PC-9 (cell line): ENCODE measurements at regions of chr1 and their contacts with region 1.

Region 1: DNA sequence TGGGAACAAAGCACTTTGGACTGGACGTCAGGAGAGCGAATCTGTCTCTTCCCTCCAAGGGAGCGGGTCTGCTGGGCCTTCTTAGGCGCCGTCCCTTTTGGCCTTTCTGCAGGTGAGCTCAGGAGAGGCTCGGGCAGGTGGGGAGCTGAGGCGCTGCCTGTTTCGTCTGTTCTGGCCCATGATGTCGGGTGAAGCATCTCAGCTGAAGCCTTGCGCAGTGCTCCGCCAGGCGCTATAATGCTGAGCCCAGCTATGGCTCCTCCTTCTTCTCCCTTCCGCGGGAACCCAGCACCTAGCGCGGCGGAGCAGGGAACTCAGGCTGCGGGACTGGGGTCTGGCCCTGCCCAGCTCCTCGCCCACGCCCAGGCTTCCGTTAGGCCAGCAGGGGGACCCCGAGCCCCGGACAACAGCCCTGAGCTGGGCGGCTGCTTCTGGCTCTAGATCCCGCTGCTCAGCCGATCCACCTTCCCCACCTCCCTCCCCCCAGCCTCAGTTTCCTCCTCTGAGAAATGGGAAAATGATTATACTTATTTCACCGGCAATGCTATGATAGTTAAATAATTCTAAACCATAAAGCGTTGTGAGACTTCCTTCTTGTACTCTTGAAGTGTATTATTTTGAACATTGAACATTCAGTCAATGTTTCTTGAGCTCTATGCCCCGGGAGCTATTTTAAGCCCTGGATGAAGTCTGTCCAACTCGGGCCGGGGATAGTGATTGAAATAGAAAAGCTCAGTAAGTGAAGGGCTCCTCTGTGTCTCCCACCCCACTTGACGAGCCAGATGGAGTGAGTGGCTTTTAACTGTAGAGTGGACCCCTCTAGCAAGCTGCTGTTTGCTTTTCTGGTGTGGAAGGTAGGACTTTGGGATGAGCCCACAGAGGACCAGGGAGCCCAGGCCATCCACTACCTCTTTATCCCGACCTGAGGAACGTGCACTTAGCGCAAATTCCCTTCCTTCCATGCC is 9.6 kb upstream of the ADORA1 start:
- DNase-seq: peak in 1 of 2 experiments; percentile 75
- H3K4me3 ChIP-seq: no peak overlapping the region
- H3K27ac ChIP-seq: no peak overlapping the region
- H3K4me1 ChIP-seq: no peaks in the 10 kb centered on the region
- H3K27me3 ChIP-seq: no peaks in the 10 kb centered on the region
- CTCF ChIP-seq: peak; percentile 83

Region 2: GRCh38 chr1:203038891-203039608 is 78.8 kb before region 1 on chr1:
- CTCF ChIA-PET with region 1: interaction called, 10 read pairs
- POLR2A ChIA-PET with region 1: no interaction called
- intact Hi-C with region 1: loop called (anchors 2 kb)
- DNase-seq: peak; percentile 44 to 55
- H3K4me3 ChIP-seq: no peak overlapping the region
- H3K27ac ChIP-seq: no peak overlapping the region
- H3K4me1 ChIP-seq: no peaks in the 10 kb centered on the region
- H3K27me3 ChIP-seq: peaks cover 5% of the 10 kb centered on the region; the same call in 1 of the 2 replicates
- CTCF ChIP-seq: peak; percentile 95

Region 3: GRCh38 chr1:203152158-203153035 is 34.5 kb after region 1 on chr1:
- CTCF ChIA-PET with region 1: interaction called, 17 read pairs
- POLR2A ChIA-PET with region 1: no interaction called
- intact Hi-C with region 1: no loop called
- DNase-seq: peak; percentile 60 to 91
- H3K4me3 ChIP-seq: peak overlapping the region; percentile 36; the same call in 1 of the 2 replicates
- H3K27ac ChIP-seq: peak overlapping the region; percentile 83
- H3K4me1 ChIP-seq: peaks cover 65% of the 10 kb centered on the region
- H3K27me3 ChIP-seq: no peaks in the 10 kb centered on the region
- CTCF ChIP-seq: no peak

Region 4: GRCh38 chr1:203172128-203173010 is 54.5 kb after region 1 on chr1:
- CTCF ChIA-PET with region 1: interaction called, 20 read pairs
- POLR2A ChIA-PET with region 1: no interaction called
- intact Hi-C with region 1: loop called (anchors 1 kb)
- DNase-seq: peak; percentile 46 to 74
- H3K4me3 ChIP-seq: no peak overlapping the region
- H3K27ac ChIP-seq: no peak overlapping the region
- H3K4me1 ChIP-seq: peaks cover 31% of the 10 kb centered on the region
- H3K27me3 ChIP-seq: no peaks in the 10 kb centered on the region
- CTCF ChIP-seq: peak; percentile 91

Region 5: GRCh38 chr1:203216274-203217138 is 98.6 kb after region 1 on chr1:
- CTCF ChIA-PET with region 1: interaction called, 15 read pairs
- POLR2A ChIA-PET with region 1: no interaction called
- intact Hi-C with region 1: loop called (anchors 1 kb)
- DNase-seq: peak; percentile 55 to 56
- H3K4me3 ChIP-seq: no peak overlapping the region
- H3K27ac ChIP-seq: no peak overlapping the region
- H3K4me1 ChIP-seq: no peaks in the 10 kb centered on the region
- H3K27me3 ChIP-seq: peaks cover 18% of the 10 kb centered on the region; the same call in 1 of the 2 replicates
- CTCF ChIP-seq: peak; percentile 86

Region 6: DNA sequence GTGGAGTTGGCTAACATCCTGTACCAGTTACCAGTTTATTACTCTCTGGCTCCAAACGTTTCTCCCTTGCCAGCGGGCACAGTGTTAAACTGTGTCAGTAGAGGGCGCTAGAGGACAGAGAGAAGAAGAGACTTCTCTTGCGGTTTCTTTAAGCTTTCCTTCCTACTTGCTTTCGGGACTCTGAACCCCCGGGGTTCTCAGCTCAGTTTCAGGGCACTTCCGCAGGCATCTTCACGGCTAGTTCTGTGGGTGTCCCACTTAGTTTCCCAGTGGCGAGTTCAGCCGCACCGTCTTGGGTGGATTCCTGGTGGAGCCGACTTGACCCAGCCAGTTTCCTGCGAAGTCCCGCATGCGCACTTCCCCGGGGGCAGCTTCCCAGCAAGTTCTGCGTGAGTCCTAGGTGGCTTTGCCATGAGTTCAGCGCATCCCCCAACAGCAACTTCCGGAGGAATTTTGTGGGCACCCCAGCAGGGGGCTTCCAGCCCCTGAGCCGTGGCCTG is 149.5 kb after region 1 on chr1:
- CTCF ChIA-PET with region 1: interaction called, 3 read pairs
- POLR2A ChIA-PET with region 1: no interaction called
- intact Hi-C with region 1: loop called (anchors 2 kb)
- DNase-seq: peak; percentile 60 to 68
- H3K4me3 ChIP-seq: no peak overlapping the region
- H3K27ac ChIP-seq: no peak overlapping the region
- H3K4me1 ChIP-seq: no peaks in the 10 kb centered on the region
- H3K27me3 ChIP-seq: no peaks in the 10 kb centered on the region
- CTCF ChIP-seq: peak; percentile 91